Left cardiac atrium (tissue), 4 donors: ENCODE measurements at regions of chr3 and their contacts with region 1.

Region 1: GRCh38 chr3:5057857-5058324 is 64.2 kb upstream of the ARL8B start:
- DNase-seq: peak; percentile 79
- ATAC-seq: peak; percentile 86 to 92

Region 2: GRCh38 chr3:4656059-4656458 is 401.8 kb before region 1 on chr3:
- intact Hi-C with region 1: loop called in 1 of 2 experiments (anchors 5 kb)
- DNase-seq: peak; percentile 68
- ATAC-seq: peak; percentile 88

Region 3: DNA sequence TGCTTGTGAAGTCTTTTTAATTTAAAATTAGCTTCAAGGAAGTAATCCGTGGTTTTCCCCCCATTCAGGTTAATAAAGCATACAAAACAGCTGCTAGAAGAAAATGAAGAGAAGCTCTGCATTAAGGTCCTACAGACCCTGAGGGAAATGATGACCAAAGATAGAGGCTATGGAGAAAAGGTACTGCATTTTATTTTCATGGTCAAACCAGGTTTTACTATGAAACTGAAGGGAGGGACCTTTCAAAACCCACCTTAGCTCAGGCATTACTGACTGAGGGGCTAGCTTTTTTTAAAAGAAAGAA is 346.2 kb before region 1 on chr3:
- intact Hi-C with region 1: loop called (anchors 2 kb)
- DNase-seq: no peak
- ATAC-seq: peak in 1 of 2 donors; percentile 3

Region 4: DNA sequence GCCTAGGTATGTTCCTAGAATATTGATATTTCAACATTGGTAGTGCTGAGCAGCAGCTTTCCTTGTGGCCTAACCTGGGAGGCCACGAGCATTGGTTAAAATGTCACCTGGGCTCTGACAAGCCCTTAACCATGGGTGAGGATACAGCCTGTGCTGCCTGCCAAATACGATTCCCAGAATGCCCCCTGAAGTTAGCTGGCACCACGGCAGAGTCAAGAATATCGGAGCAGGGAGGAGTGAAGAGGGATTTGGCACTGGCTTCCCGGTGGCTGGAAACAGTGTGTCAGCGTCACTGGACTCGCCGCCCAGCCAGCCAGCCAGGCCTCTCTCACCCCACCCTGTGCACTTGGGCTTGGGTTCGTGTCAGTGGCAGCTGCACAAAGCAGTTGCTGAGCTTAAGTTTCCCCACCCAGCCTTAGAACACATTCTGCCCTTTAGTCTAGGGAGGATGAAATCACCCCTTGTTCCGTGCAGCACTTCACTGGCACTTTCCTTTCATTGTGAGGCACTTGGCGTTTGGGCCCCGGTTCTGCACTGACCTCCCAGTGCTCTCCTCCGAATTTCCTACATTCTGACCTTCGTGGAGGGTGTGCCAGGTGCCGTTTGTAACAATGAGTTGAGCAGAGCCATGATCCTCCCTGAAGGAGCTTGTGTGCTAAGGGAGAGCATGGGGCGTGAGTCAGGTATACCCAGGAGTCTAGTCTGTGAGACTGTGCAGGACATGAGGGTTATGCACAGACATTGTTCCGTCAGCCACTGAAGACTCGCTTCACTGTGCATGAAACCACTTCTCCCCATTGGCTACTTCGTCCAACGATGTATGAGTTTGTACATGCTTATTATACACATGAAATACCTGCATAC is 231.4 kb before region 1 on chr3:
- intact Hi-C with region 1: loop called in 1 of 2 experiments (anchors 10 kb)
- DNase-seq: peak; percentile 92
- ATAC-seq: peak; percentile 82 to 85

Region 5: DNA sequence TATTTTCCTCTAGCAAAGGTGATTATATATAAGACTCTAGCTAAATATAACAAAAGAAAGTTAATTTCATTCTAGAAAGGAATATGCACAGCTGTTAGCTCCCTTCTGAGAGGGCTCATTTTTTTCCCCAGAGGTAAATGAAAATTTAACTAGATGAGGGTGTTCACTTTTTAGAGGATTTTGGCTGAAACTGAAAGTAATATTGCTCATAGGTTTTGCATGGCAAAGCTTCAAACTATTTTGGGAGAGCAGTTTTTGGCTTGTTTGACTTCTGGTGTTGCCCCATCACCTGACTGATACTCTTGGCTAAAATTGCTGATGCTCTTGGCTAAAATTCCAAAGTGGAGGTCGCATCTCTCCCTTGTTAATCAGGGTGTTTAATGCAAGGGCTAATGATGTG is 441.5 kb after region 1 on chr3:
- intact Hi-C with region 1: no loop called
- DNase-seq: no peak
- ATAC-seq: no peak